ENCODE measurements at regions of chr9 and their contacts with region 1.

Region 1: GRCh38 chr9:6827439-6827838 is 69.7 kb downstream of the KDM4C start:
- DNase-seq: peak in 8 of 9 donors; percentile 2 to 48 (median 38)
- ATAC-seq: peak; percentile 54
- H3K4me3 ChIP-seq: no peak overlapping the region
- H3K4me3 Mint-ChIP-seq: no peak overlapping the region
- H3K27ac ChIP-seq: no peak overlapping the region
- H3K27ac Mint-ChIP-seq: peak overlapping the region in 3 of 9 donors; percentile 5 to 53 (median 35)
- H3K4me1 ChIP-seq: no peaks in the 10 kb centered on the region
- H3K4me1 Mint-ChIP-seq: peaks cover 1 to 23% (median 8%) of the 10 kb centered on the region in 7 donors
- H3K27me3 ChIP-seq: no peaks in the 10 kb centered on the region
- H3K27me3 Mint-ChIP-seq: no peaks in the 10 kb centered on the region

Region 2: DNA sequence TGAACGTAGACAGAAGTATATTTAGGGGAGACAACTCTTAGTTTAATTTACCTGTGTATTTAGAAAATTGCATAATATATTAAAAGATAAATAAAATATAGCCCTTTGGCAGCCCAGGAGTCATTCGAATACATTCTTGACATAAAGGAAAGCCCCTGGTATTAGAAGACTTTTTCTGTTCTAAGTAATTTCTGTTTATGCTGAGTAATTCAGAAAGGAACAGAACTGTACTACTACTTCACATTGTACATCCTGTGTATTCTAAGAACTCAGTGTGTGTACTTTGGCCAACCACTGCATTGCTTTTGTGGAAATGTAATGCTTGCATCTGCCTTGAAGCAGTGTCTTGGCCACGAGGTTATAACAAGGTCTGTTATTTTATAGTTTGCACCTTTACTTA is 66.7 kb after region 1 on chr9:
- CTCF ChIA-PET with region 1: no interaction called
- POLR2A ChIA-PET with region 1: no interaction called
- intact Hi-C with region 1: loop called in 1 of 2 experiments (anchors 10 kb)
- DNase-seq: no peak
- ATAC-seq: no peak
- H3K4me3 ChIP-seq: no peak overlapping the region
- H3K4me3 Mint-ChIP-seq: peak overlapping the region in 1 of 10 donors; percentile 69
- H3K27ac ChIP-seq: no peak overlapping the region
- H3K27ac Mint-ChIP-seq: peak overlapping the region in 2 of 9 donors; percentile 47 to 78
- H3K4me1 ChIP-seq: peaks cover 6 to 12% of the 10 kb centered on the region in 2 donors
- H3K4me1 Mint-ChIP-seq: peaks cover 40 to 71% (median 54%) of the 10 kb centered on the region in 7 donors
- H3K27me3 ChIP-seq: no peaks in the 10 kb centered on the region
- H3K27me3 Mint-ChIP-seq: no peaks in the 10 kb centered on the region

Region 3: DNA sequence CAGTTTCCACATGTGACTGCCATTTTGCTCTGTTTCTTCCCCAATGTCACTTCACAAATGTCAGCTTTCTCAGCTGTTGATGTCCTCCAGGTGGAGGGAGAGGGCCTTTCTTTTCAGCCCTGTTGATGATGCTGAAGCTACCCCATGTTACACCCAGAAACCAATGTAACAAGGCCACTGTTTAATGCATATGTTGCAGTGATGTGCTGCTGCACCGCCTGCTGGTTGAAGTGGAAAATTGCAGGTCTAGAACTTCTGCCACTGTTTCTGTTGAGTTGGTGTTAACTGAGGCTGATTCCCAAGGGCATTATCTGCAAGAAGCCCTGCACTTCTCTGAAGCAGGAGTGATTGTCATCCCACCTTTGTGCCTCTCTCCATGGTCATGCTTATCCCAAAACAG is 358.7 kb after region 1 on chr9:
- CTCF ChIA-PET with region 1: no interaction called
- POLR2A ChIA-PET with region 1: no interaction called
- intact Hi-C with region 1: loop called in 1 of 2 experiments (anchors 5 kb)
- DNase-seq: no peak
- ATAC-seq: no peak
- H3K4me3 ChIP-seq: no peak overlapping the region
- H3K4me3 Mint-ChIP-seq: no peak overlapping the region
- H3K27ac ChIP-seq: no peak overlapping the region
- H3K27ac Mint-ChIP-seq: no peak overlapping the region
- H3K4me1 ChIP-seq: no peaks in the 10 kb centered on the region
- H3K4me1 Mint-ChIP-seq: no peaks in the 10 kb centered on the region
- H3K27me3 ChIP-seq: no peaks in the 10 kb centered on the region
- H3K27me3 Mint-ChIP-seq: no peaks in the 10 kb centered on the region

Measured in naive thymus-derived CD4-positive, alpha-beta T cell (primary cell).